ENCODE measurements at regions of chr10 and their contacts with region 1.

Region 1: GRCh38 chr10:21273400-21273932 is 252.0 kb downstream of the SKIDA1 start:
- DNase-seq: no peak
- ATAC-seq: peak; percentile 22 to 42 (median 30)
- H3K4me3 ChIP-seq: no peak overlapping the region
- H3K27ac ChIP-seq: no peak overlapping the region
- H3K4me1 ChIP-seq: no peaks in the 10 kb centered on the region
- H3K27me3 ChIP-seq: no peaks in the 10 kb centered on the region
- CTCF ChIP-seq: no peak
- POLR2A ChIP-seq: no peak

Region 2: GRCh38 chr10:21078410-21079329 is 194.8 kb before region 1 on chr10:
- intact Hi-C with region 1: loop called (anchors 5 to 10 kb)
- DNase-seq: peak in 2 of 3 donors; percentile 43 to 69
- ATAC-seq: peak; percentile 94 to 97 (median 95)
- H3K4me3 ChIP-seq: no peak overlapping the region
- H3K27ac ChIP-seq: no peak overlapping the region
- H3K4me1 ChIP-seq: no peaks in the 10 kb centered on the region
- H3K27me3 ChIP-seq: no peaks in the 10 kb centered on the region
- CTCF ChIP-seq: peak; percentile 69 to 81 (median 76)
- POLR2A ChIP-seq: no peak

Region 3: DNA sequence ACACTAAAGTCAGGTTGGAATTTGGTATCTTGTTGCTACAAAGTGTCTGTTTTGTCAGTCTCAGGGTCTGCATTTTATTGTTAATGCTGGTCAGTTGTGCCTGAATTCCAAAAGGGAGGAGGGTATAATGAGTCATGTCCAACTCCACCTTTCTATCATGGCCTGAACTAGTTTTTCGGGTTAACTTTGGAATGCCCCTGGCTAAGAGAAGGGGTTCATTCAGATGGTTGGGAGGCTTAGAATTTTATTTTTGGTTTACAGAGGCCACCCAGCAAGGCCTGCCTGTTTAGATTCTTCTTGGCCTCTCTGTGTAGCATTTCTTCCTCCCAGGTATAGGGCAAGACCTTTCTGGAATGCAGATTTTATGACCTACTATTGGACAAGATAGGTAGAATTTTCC is 158.8 kb after region 1 on chr10:
- intact Hi-C with region 1: no loop called
- DNase-seq: no peak
- ATAC-seq: no peak
- H3K4me3 ChIP-seq: no peak overlapping the region
- H3K27ac ChIP-seq: no peak overlapping the region
- H3K4me1 ChIP-seq: no peaks in the 10 kb centered on the region
- H3K27me3 ChIP-seq: no peaks in the 10 kb centered on the region
- CTCF ChIP-seq: no peak
- POLR2A ChIP-seq: no peak